Posterior vena cava (tissue), 2 donors: ENCODE measurements at regions of chr21 and their contacts with region 1.

Region 1: GRCh38 chr21:43634618-43635017 is 24.7 kb downstream of the HSF2BP start:
- DNase-seq: no peak

Region 2: DNA sequence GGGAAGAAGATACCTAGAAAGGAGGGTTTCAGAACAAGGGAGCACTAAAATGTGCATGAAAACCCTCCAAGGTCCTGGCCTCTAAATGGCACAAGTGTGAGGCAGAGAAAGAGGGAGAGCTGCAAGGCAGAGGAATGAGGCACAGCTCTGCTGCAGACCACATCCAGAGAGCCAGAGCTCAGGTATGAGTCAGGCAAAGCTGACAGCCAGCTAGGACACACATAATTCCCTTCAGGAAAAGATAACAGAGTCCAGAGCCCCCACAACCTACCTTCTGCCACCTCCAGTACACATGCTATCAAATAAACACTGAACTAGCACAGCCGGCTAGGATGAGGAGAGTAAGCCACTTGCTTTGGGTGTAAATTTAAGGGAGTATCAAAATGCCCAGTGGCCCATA is 37.6 kb before region 1 on chr21:
- intact Hi-C with region 1: loop called in 1 of 2 experiments (anchors 2 kb)
- DNase-seq: no peak

Region 3: DNA sequence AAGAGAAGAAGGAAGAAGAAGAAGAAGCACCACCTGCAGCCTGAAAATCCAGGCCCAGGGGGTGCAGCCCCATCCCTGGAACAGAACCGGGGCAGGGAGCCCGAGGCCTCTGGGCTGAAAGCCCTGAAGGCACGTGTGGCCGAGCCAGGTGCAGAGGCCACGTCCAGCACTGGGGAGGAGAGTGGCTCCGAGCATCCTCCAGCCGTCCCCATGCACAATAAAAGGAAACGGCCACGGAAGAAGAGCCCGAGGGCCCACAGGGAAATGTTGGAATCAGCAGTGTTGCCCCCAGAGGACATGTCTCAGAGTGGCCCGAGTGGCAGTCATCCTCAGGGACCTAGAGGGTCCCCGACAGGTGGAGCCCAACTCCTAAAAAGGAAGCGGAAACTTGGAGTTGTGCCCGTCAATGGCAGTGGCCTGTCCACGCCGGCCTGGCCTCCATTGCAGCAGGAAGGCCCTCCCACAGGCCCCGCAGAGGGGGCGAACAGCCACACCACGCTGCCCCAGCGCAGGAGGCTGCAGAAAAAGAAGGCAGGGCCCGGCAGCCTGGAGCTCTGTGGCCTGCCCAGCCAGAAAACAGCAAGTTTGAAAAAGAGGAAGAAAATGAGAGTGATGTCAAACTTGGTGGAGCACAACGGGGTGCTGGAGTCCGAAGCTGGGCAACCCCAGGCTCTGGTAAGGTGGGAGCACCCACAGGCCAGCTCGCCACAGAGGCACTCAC is 53.1 kb after region 1 on chr21:
- intact Hi-C with region 1: no loop called
- DNase-seq: no peak